AG04450 (cell line): ENCODE measurements at regions of chr3 and their contacts with region 1.

Region 1: GRCh38 chr3:197256836-197257444 is 41.5 kb downstream of the DLG1 start:
- DNase-seq: peak; percentile 24
- H3K4me3 ChIP-seq: no peak overlapping the region
- H3K27ac ChIP-seq: no peak overlapping the region
- H3K27me3 ChIP-seq: no peaks in the 10 kb centered on the region
- CTCF ChIP-seq: peak; percentile 68

Region 2: DNA sequence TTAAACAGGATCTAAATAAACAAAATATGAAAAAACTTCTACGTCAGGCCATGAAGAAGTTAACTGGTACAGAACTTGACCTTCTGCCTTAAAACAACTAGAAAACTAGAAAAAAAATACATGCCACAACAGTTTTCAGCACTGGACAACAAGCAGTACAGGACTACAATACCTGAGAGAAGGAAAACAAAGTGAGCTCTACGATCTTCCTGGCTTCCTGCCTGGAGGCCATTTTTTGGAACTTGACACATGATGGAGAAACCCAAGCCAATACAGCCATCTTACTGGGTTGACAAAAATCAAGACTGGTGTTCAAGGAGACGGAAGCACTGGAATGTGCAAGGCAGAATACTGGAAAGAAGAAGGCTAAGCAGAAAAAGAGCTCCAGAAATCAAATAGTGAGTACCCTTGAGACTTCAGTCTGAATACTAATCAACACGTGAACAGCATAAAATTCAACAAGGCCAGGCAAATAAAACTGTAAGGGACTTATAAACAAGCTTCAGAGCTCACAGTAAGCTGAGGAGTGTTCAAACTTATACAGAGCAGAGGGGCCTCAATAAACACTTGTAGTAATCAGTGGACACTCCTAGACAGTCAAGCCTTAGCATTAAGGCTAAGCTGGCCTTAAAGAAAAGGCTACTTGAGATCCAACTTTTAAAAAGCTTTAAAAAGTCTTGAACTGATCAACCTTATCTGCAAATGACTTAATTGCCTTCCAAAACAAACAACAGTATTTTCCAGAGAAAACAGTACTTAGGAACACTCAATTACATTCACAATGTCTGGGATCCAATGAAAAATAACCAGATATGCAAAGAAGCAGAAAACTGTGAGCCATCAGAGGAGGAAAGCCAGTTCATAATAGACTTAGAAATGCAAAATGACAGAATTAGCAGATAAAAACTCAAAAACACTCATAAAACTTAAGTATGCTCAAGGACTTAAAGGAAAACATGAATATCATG is 21.7 kb before region 1 on chr3:
- CTCF ChIA-PET with region 1: interaction called, 18 read pairs
- POLR2A ChIA-PET with region 1: no interaction called
- DNase-seq: no peak
- H3K4me3 ChIP-seq: no peak overlapping the region
- H3K27ac ChIP-seq: no peak overlapping the region
- H3K27me3 ChIP-seq: no peaks in the 10 kb centered on the region
- CTCF ChIP-seq: no peak

Region 3: GRCh38 chr3:197270558-197271317 is 13.8 kb after region 1 on chr3:
- CTCF ChIA-PET with region 1: interaction called, 27 read pairs
- POLR2A ChIA-PET with region 1: no interaction called
- DNase-seq: no peak
- H3K4me3 ChIP-seq: no peak overlapping the region
- H3K27ac ChIP-seq: no peak overlapping the region
- H3K27me3 ChIP-seq: no peaks in the 10 kb centered on the region
- CTCF ChIP-seq: no peak

Region 4: GRCh38 chr3:197466586-197467399 is 209.9 kb after region 1 on chr3:
- CTCF ChIA-PET with region 1: interaction called, 18 read pairs
- POLR2A ChIA-PET with region 1: no interaction called
- DNase-seq: no peak
- H3K4me3 ChIP-seq: no peak overlapping the region; the same call in 1 of the 2 replicates
- H3K27ac ChIP-seq: peak overlapping the region; percentile 66
- H3K27me3 ChIP-seq: peaks cover 6% of the 10 kb centered on the region
- CTCF ChIP-seq: no peak

Region 5: GRCh38 chr3:197511130-197511529 is 254.2 kb after region 1 on chr3:
- CTCF ChIA-PET with region 1: interaction called, 74 read pairs
- POLR2A ChIA-PET with region 1: interaction called, 3 read pairs
- DNase-seq: no peak
- H3K4me3 ChIP-seq: no peak overlapping the region
- H3K27ac ChIP-seq: no peak overlapping the region
- H3K27me3 ChIP-seq: peaks cover 5% of the 10 kb centered on the region
- CTCF ChIP-seq: no peak

Region 6: GRCh38 chr3:197599089-197599765 is 342.3 kb after region 1 on chr3:
- CTCF ChIA-PET with region 1: interaction called, 13 read pairs
- POLR2A ChIA-PET with region 1: no interaction called
- DNase-seq: peak; percentile 44
- H3K4me3 ChIP-seq: peak overlapping the region; percentile 53
- H3K27ac ChIP-seq: peak overlapping the region; percentile 39
- H3K27me3 ChIP-seq: no peaks in the 10 kb centered on the region
- CTCF ChIP-seq: peak; percentile 90